Astrocyte of the cerebellum (primary cell): ENCODE measurements at regions of chr2 and their contacts with region 1.

Region 1: GRCh38 chr2:233174137-233174536 is 77.3 kb upstream of the ATG16L1 start:
- DNase-seq: no peak
- H3K4me3 ChIP-seq: no peak overlapping the region
- CTCF ChIP-seq: no peak

Region 2: GRCh38 chr2:233084488-233084887 is 89.6 kb before region 1 on chr2:
- in situ Hi-C with region 1: loop called (anchors 5 kb)
- DNase-seq: no peak
- H3K4me3 ChIP-seq: no peak overlapping the region
- CTCF ChIP-seq: no peak

Region 3: DNA sequence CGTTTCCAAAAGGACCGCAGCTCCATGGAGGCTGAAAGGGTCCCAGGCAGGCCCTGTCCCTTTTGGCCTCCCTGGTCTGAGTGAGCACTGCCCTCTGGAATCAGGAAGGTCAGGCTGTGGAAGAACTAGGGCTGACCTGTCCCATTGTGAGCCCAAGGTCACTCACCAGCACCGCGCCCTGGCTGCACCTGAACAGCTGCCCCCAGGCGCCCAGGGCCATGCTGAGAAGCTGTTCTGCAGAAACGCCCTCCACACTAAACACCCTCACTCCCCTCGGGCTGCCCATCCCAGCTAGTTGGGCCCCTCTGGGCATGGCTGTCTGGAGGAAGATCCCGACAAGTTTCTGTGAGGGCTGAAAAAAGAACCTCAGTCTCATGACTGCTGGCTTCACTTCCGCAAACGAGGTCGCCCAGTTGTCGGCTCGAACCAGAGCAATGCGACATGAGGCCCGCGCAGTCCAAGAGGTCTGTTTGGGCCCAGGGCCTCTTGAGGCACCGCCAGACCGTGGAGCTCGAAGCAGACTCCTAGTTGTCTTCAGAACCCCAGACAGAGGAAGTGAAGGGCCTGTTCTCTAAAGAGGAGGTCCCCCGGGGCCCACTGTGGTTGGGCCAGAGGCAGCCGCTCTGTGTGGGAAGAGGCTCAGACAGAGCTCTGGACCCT is 49.6 kb before region 1 on chr2:
- in situ Hi-C with region 1: no loop called
- DNase-seq: no peak
- H3K4me3 ChIP-seq: no peak overlapping the region
- CTCF ChIP-seq: no peak

Region 4: DNA sequence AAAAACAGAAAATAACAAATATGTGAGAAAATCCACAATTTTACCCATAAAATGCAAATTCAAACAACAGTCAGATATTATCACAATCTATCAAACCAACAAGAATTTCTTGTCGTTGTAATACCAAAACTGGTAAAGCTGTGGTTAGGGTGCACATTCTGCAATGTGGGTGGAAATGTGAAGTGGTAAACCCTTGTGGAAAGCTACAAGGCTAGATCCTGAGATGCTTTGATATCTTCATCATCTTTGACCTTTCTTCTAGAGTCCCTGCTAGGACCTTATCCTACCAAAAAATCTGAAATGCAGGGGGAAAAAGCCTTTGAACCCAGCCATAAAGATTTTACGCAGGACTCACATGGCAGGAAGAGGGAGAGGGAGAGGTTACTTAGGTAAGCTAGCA is 60.1 kb after region 1 on chr2:
- in situ Hi-C with region 1: loop called (anchors 5 kb)
- DNase-seq: no peak
- H3K4me3 ChIP-seq: no peak overlapping the region
- CTCF ChIP-seq: no peak

Region 5: GRCh38 chr2:233460726-233461441 is 286.7 kb after region 1 on chr2:
- in situ Hi-C with region 1: no loop called
- DNase-seq: no peak
- H3K4me3 ChIP-seq: no peak overlapping the region
- CTCF ChIP-seq: no peak